Dendritic cell treated with granulocyte-macrophage colony-stimulating factor and Interleukin-4, amounts not matched to agents 40 ng/mL and 50 ng/mL, for 4 days (primary cell): ENCODE measurements at regions of chr3 and their contacts with region 1.

Region 1: DNA sequence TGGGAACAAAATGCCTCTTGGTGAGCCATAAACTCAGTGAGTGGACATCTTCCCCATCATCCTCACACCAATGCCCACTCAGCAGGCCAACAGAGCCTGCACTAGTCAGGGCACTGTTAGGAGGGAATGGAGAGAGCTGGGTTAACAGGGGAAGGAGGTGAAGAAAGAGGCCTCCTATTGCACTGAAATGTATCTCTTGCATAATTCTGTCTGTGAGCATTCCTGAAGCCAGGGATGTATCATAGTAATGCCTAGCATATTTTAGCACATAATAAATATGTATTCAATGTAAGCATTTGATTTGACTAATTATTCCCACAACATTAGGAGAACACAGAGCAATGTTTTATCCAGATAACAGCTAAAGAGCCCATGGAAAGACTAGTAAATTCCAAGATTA is 81.2 kb downstream of the ANO10 start:
- H3K4me3 Mint-ChIP-seq: no peak overlapping the region
- H3K27ac Mint-ChIP-seq: no peak overlapping the region
- H3K4me1 Mint-ChIP-seq: no peaks in the 10 kb centered on the region
- H3K27me3 Mint-ChIP-seq: no peaks in the 10 kb centered on the region

Region 2: DNA sequence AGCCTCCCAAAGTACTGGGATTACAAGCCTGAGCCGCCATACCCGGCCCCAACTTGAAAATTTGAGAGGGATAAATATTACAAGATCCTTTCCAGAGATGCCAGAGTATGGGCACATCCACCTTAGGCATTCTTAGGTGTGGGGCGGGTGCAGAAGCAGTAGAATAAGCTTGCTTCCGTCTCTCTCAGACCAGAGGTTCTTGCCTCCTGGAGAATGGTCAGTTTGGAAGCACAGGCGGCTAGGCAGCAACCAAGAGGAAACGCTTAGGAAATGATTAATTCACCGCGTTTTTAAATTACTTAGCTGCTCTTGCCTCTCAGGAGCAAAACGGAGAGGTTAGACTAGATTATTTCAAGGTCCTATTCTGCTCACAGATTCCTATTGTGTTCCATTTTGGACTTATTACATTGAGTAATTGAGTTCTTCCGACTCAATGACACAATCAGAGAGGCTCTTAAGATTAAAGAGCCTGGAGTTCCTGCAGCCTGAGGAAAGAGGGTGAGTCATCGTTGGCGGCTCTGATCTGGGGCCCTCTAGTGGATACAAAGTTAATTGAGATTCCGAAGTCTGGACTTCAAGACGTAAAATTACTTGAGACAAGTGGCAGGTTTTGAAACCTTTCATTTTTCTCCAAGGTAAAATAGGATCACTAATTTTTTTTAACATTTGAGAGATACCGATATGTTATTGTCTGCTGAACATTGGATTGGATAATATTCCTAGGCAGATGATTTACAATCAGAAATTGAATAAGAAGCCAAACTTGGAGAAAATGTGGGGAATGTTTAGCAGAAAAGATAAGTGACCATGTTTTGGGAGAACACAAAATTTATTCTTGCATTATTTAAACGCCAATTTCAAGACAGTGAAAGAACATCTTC is 695.2 kb after region 1 on chr3:
- intact Hi-C with region 1: loop called (anchors 2 kb)
- H3K4me3 Mint-ChIP-seq: peak overlapping the region; percentile 6
- H3K27ac Mint-ChIP-seq: no peak overlapping the region
- H3K4me1 Mint-ChIP-seq: no peaks in the 10 kb centered on the region
- H3K27me3 Mint-ChIP-seq: no peaks in the 10 kb centered on the region